Natural killer cell (primary cell): ENCODE measurements at regions of chr13 and their contacts with region 1.

Region 1: GRCh38 chr13:41465241-41465847 is 8.0 kb downstream of the RGCC start:
- DNase-seq: peak; percentile 79 to 94
- ATAC-seq: peak; percentile 79 to 91 (median 87)
- H3K4me3 ChIP-seq: no peak overlapping the region
- H3K4me3 Mint-ChIP-seq: peak overlapping the region; percentile 55
- H3K27ac ChIP-seq: peak overlapping the region; percentile 81
- H3K27ac Mint-ChIP-seq: peak overlapping the region; percentile 85 to 95
- H3K4me1 ChIP-seq: peaks cover 44% of the 10 kb centered on the region
- H3K4me1 Mint-ChIP-seq: peaks cover 54 to 57% of the 10 kb centered on the region in 2 donors
- H3K27me3 ChIP-seq: no peaks in the 10 kb centered on the region
- H3K27me3 Mint-ChIP-seq: no peaks in the 10 kb centered on the region
- CTCF ChIP-seq: no peak

Region 2: GRCh38 chr13:41162151-41162550 is 303.2 kb before region 1 on chr13:
- intact Hi-C with region 1: no loop called
- DNase-seq: no peak
- ATAC-seq: no peak
- H3K4me3 ChIP-seq: no peak overlapping the region
- H3K4me3 Mint-ChIP-seq: no peak overlapping the region
- H3K27ac ChIP-seq: no peak overlapping the region
- H3K27ac Mint-ChIP-seq: no peak overlapping the region
- H3K4me1 ChIP-seq: no peaks in the 10 kb centered on the region
- H3K4me1 Mint-ChIP-seq: peaks cover 0 to 7% of the 10 kb centered on the region in 2 donors
- H3K27me3 ChIP-seq: no peaks in the 10 kb centered on the region
- H3K27me3 Mint-ChIP-seq: no peaks in the 10 kb centered on the region
- CTCF ChIP-seq: no peak

Region 3: GRCh38 chr13:41428155-41428554 is 37.2 kb before region 1 on chr13:
- intact Hi-C with region 1: no loop called
- DNase-seq: peak in 1 of 2 donors; percentile 69
- ATAC-seq: peak; percentile 75 to 91 (median 78)
- H3K4me3 ChIP-seq: no peak overlapping the region
- H3K4me3 Mint-ChIP-seq: no peak overlapping the region
- H3K27ac ChIP-seq: no peak overlapping the region
- H3K27ac Mint-ChIP-seq: no peak overlapping the region
- H3K4me1 ChIP-seq: peaks cover 10% of the 10 kb centered on the region
- H3K4me1 Mint-ChIP-seq: peaks cover 6 to 7% of the 10 kb centered on the region in 2 donors
- H3K27me3 ChIP-seq: no peaks in the 10 kb centered on the region
- H3K27me3 Mint-ChIP-seq: peaks cover 13 to 14% of the 10 kb centered on the region in 2 donors
- CTCF ChIP-seq: no peak

Region 4: DNA sequence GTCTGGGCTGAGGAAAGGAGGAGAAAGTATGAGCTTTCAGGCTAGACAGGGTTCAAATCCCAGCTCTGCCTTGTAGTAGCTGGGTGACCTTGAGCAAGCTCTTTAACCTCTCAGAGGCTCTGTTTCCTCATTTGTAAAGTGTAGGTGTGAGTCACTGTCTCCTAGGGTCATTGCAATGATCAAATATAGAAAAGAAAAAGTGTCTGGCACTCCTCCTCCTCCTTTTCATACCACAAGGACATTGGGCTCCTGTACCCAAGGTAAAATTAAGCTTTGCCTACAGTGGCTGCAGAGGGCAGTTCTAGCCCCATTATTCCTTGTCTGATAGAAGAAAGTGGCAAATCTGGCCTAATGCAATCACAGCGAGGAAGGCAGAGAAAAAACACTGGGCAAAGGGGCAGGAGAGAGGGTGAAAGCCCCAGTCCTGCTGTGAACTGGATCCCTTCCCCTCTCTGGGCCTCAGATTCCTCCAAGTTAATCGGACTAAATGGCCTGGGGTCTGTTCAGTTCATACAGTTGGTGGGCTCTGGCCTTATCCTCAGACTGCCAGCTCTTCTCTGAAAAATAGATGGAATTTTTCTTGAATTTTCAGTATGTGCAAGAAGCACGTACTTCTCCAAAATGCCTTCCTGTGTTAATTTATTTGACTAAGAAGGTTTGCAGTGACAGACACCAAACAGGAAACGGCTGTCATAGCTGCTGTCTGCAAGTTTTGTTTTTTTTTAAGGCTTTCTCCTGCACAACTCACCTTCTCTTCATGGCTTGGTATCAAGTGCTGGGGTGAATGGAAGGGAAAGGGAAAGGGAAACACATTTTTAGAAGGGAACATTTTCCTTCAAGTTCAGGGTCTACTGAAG is 27.3 kb after region 1 on chr13:
- intact Hi-C with region 1: loop called (anchors 2 kb)
- DNase-seq: peak in 1 of 2 donors; percentile 80
- ATAC-seq: peak; percentile 79 to 88 (median 83)
- H3K4me3 ChIP-seq: no peak overlapping the region
- H3K4me3 Mint-ChIP-seq: peak overlapping the region; percentile 37
- H3K27ac ChIP-seq: peak overlapping the region; percentile 55
- H3K27ac Mint-ChIP-seq: peak overlapping the region; percentile 50
- H3K4me1 ChIP-seq: peaks cover 23% of the 10 kb centered on the region
- H3K4me1 Mint-ChIP-seq: peaks cover 27 to 31% of the 10 kb centered on the region in 2 donors
- H3K27me3 ChIP-seq: no peaks in the 10 kb centered on the region
- H3K27me3 Mint-ChIP-seq: peaks cover 3 to 5% of the 10 kb centered on the region in 2 donors
- CTCF ChIP-seq: no peak

Region 5: GRCh38 chr13:42247883-42248282 is 782.5 kb after region 1 on chr13:
- intact Hi-C with region 1: no loop called
- DNase-seq: no peak
- ATAC-seq: no peak
- H3K4me3 ChIP-seq: no peak overlapping the region
- H3K4me3 Mint-ChIP-seq: no peak overlapping the region
- H3K27ac ChIP-seq: no peak overlapping the region
- H3K27ac Mint-ChIP-seq: no peak overlapping the region
- H3K4me1 ChIP-seq: no peaks in the 10 kb centered on the region
- H3K4me1 Mint-ChIP-seq: no peaks in the 10 kb centered on the region
- H3K27me3 ChIP-seq: no peaks in the 10 kb centered on the region
- H3K27me3 Mint-ChIP-seq: peaks cover 8 to 25% of the 10 kb centered on the region in 2 donors
- CTCF ChIP-seq: no peak